Posterior cingulate gyrus (tissue), 11 donors: ENCODE measurements at regions of chr6 and their contacts with region 1.

Region 1: GRCh38 chr6:138765896-138766655 is 7.5 kb upstream of the CCDC28A start:
- DNase-seq: no peak

Region 2: DNA sequence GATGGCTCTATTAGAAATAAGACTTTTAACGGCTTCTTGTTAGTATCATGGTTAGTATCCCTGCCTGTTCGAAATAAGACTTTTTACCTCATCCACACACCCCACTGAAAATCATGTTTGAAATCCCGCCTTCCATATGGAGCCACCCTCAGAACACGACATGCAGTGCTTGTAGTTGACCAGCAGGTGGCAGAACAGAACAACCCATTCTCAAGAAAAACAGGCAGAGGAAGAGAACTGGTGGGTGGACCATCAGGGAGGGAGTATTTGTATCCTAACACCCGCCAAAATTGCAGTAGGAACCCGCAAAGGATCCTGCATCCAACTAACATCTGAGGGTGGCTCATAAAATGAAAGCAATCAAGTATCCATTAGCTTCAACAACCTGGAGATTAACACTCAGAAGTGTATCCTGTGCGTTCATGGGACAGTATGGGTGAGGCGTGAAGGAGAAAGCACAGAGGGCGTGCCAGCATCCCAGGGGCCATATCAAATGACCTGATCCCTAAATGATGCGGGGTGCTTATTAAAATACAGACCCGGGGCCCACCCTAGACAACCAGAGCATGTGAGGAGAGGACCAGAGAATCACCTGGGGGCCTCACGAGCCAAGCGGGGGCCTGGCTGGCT is 177.2 kb before region 1 on chr6:
- intact Hi-C with region 1: loop called (anchors 2 kb)
- DNase-seq: peak in 5 of 10 donors; percentile 39 to 63 (median 53)

Region 3: DNA sequence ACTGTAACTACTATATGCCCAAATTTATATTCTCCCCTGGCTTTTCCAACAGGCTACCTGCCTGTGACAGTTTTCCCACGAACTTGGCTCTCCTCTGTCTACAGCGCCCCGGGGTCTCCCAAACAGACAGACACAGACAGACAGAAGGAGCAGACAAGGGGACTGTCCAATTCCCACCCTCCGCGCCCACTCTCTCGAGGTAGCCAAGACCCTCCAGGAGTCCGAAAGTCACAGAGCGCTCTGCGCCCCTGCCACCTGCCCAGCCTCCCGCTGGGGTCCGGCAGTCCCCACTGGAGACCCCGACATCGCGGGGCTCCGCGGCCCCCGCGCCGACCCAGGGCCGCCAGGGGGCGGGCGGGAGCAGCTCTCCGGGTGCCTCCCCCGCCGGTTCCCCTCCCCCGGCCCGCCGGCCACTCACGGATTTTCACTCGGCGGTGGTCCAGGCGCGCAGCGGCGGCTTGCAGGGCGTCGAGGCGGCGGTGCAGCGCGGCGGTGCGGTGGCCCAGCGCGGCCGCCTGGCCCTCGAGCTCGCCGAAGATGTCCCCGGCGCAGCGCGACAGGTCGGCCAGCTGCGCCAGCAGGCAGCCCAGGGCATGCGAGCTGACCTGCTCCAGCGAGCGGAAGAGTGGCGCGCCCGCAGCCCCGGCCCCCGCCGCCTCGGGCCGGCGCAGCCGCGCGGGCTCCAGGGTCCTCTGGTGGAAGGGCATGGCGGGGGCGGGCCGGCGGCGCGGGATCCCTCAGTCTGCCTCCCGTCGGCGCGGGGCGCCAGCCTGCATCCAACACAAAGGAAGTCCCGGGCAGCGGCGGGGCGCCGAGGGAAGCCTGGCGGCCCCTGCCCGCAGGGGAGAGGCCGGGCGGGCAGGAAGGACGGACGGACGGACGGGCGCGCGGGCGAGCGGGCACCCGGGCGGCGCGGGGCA is 73.8 kb before region 1 on chr6:
- intact Hi-C with region 1: loop called (anchors 5 kb)
- DNase-seq: peak in 9 of 10 donors; percentile 30 to 90 (median 51)